MCF 10A (cell line): ENCODE measurements at regions of chr18 and their contacts with region 1.

Region 1: DNA sequence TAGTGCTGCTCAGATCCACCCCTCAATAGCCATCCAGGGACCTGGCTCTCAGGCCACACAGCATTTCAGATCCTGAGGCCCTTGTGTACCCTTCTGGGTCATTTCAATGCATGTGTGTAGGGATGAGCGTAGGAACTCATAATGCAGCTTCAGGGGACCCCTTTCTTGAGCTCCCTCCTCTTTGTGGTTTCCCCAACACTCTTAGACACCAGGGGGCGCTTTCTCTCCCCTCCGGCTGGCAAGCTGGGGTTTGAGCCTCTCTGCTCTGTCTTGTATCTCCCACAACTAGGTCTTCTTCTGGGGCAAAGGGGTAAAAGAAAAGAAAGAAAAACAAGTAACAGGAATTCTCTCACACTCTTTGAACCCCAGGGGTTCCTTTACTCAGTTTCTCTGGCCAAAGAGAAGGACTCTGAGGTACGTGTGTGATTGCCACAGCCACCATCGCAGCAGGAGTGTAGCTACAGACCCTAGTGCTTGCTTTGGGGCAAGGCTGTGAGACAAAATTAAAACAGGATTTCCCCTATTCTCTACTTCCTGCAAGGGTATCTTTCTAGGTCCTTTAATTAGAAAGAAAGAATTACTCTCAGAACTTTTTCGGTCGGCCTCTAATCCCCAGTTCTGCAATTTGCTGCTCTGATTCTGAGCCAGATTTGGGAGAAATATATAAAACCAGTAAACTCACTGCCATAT is 38.0 kb downstream of the CABYR start:
- DNase-seq: peak; percentile 65
- H3K4me3 Mint-ChIP-seq: no peak overlapping the region
- H3K27ac Mint-ChIP-seq: no peak overlapping the region
- H3K4me1 Mint-ChIP-seq: peaks cover 4% of the 10 kb centered on the region
- H3K27me3 Mint-ChIP-seq: no peaks in the 10 kb centered on the region
- CTCF ChIP-seq: peak; percentile 82

Region 2: DNA sequence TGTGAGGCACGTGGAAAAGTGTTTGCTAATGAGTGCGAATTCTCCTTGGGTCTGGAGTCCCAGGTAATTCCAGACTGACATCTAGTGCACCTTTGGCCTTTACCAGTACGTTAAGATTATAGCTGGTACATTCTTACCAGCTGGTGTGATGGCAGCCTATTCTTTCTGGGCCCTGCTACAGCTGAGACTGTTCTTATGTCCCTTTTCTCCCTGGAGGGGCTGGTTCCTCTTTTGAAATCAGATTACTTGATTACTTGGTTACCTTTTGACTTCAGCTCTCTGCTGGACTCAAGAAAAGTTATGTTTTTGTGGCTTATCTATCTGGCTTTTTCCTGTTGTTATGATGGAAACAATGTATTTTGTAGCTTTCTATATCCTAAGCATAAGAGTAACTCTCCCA is 23.5 kb before region 1 on chr18:
- CTCF ChIA-PET with region 1: interaction called, 12 read pairs
- POLR2A ChIA-PET with region 1: no interaction called
- intact Hi-C with region 1: no loop called
- DNase-seq: no peak
- H3K4me3 Mint-ChIP-seq: no peak overlapping the region
- H3K27ac Mint-ChIP-seq: no peak overlapping the region
- H3K4me1 Mint-ChIP-seq: no peaks in the 10 kb centered on the region
- H3K27me3 Mint-ChIP-seq: no peaks in the 10 kb centered on the region
- CTCF ChIP-seq: no peak

Region 3: DNA sequence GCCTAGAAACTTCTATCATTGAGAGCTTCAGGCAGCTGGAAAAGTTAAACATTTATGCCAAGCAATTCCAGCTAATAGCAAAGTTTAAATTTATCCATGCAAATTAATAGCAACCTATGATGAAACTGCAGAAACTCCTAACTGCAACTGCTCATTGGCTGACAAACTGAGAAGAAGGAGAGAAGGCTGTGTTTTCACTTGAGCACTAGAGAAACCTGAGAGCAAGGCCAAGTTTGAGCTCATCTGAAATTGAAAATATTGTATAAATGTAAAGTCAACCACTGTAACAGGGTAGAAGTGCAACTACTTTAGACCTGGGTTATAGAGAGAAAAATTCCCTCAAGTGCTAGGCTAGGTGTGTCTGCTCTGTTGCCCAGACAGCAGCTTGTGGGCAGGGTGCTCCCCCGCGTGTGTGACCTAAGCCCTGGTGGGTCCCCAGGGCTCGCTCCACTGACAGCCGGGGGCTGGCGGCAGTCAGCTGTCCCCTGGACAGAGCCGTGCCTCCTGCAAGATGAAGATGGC is 12.2 kb after region 1 on chr18:
- CTCF ChIA-PET with region 1: interaction called, 54 read pairs
- POLR2A ChIA-PET with region 1: interaction called, 4 read pairs
- intact Hi-C with region 1: no loop called
- DNase-seq: no peak
- H3K4me3 Mint-ChIP-seq: no peak overlapping the region
- H3K27ac Mint-ChIP-seq: no peak overlapping the region
- H3K4me1 Mint-ChIP-seq: peaks cover 5% of the 10 kb centered on the region
- H3K27me3 Mint-ChIP-seq: no peaks in the 10 kb centered on the region
- CTCF ChIP-seq: no peak

Region 4: GRCh38 chr18:24271381-24272331 is 94.8 kb after region 1 on chr18:
- CTCF ChIA-PET with region 1: interaction called, 12 read pairs
- POLR2A ChIA-PET with region 1: interaction called, 14 read pairs
- intact Hi-C with region 1: loop called (anchors 1 kb)
- DNase-seq: peak; percentile 79
- H3K4me3 Mint-ChIP-seq: peak overlapping the region; percentile 96
- H3K27ac Mint-ChIP-seq: peak overlapping the region; percentile 65
- H3K4me1 Mint-ChIP-seq: peaks cover 26% of the 10 kb centered on the region
- H3K27me3 Mint-ChIP-seq: no peaks in the 10 kb centered on the region
- CTCF ChIP-seq: no peak

Region 5: GRCh38 chr18:24631243-24632025 is 454.6 kb after region 1 on chr18:
- CTCF ChIA-PET with region 1: no interaction called
- POLR2A ChIA-PET with region 1: no interaction called
- intact Hi-C with region 1: no loop called
- DNase-seq: no peak
- H3K4me3 Mint-ChIP-seq: no peak overlapping the region
- H3K27ac Mint-ChIP-seq: no peak overlapping the region
- H3K4me1 Mint-ChIP-seq: peaks cover 12% of the 10 kb centered on the region
- H3K27me3 Mint-ChIP-seq: no peaks in the 10 kb centered on the region
- CTCF ChIP-seq: no peak

Region 6: DNA sequence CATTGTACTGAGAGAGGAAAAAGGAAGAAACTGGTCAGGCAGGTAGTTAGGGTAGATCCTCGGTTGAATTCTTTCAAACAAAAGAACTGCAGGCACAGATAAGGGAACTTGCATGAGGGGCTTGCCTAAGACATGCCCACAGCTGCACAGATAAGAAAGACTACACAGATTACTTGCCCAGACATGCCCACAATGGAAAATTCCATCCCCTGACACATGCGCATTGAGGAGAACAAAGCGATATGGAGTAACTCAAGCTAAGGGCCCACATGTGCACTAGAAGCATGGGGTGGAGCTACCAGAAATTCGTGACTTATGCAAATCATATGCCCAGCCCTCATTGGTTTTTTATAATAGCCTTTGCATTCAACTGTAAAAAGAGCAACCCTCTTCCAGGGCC is 1356.3 kb after region 1 on chr18:
- CTCF ChIA-PET with region 1: no interaction called
- POLR2A ChIA-PET with region 1: no interaction called
- intact Hi-C with region 1: no loop called
- DNase-seq: no peak
- H3K4me3 Mint-ChIP-seq: no peak overlapping the region
- H3K27ac Mint-ChIP-seq: no peak overlapping the region
- H3K4me1 Mint-ChIP-seq: no peaks in the 10 kb centered on the region
- H3K27me3 Mint-ChIP-seq: no peaks in the 10 kb centered on the region
- CTCF ChIP-seq: no peak